ENCODE measurements at regions of chr3 and their contacts with region 1.

Region 1: GRCh38 chr3:41198950-41199865 is at the start of gene CTNNB1:
- DNase-seq: peak; percentile 85 to 95 (median 92)
- ATAC-seq: peak; percentile 80 to 83
- H3K4me3 Mint-ChIP-seq: peak within 1 kb of the TSS; percentile 89 to 99 (median 96)
- H3K27ac Mint-ChIP-seq: peak within 1 kb of the TSS; percentile 94 to 99 (median 96)
- H3K4me1 Mint-ChIP-seq: peaks cover 20 to 48% (median 37%) of the 10 kb centered on the region in 4 donors
- H3K27me3 Mint-ChIP-seq: no peaks in the 10 kb centered on the region
- polyA plus RNA-seq, gene CTNNB1: 30.6 to 59.2 (median 33.4) TPM

Region 2: GRCh38 chr3:41117398-41117870 is 81.8 kb before region 1 on chr3:
- POLR2A ChIA-PET with region 1: interaction called, 52 read pairs
- DNase-seq: peak; percentile 60 to 96 (median 86)
- ATAC-seq: peak; percentile 87 to 95
- H3K4me3 Mint-ChIP-seq: peak overlapping the region; percentile 50 to 88 (median 74)
- H3K27ac Mint-ChIP-seq: peak overlapping the region; percentile 85 to 98 (median 94)
- H3K4me1 Mint-ChIP-seq: peaks cover 27 to 38% (median 36%) of the 10 kb centered on the region in 4 donors
- H3K27me3 Mint-ChIP-seq: no peaks in the 10 kb centered on the region

Region 3: GRCh38 chr3:41188268-41188667 is 10.9 kb before region 1 on chr3:
- POLR2A ChIA-PET with region 1: interaction called, 10 read pairs
- DNase-seq: no peak
- ATAC-seq: no peak
- H3K4me3 Mint-ChIP-seq: no peak overlapping the region
- H3K27ac Mint-ChIP-seq: no peak overlapping the region
- H3K4me1 Mint-ChIP-seq: peaks cover 3 to 9% (median 6%) of the 10 kb centered on the region in 4 donors
- H3K27me3 Mint-ChIP-seq: peaks cover 0 to 13% (median 3%) of the 10 kb centered on the region in 5 donors

Region 4: DNA sequence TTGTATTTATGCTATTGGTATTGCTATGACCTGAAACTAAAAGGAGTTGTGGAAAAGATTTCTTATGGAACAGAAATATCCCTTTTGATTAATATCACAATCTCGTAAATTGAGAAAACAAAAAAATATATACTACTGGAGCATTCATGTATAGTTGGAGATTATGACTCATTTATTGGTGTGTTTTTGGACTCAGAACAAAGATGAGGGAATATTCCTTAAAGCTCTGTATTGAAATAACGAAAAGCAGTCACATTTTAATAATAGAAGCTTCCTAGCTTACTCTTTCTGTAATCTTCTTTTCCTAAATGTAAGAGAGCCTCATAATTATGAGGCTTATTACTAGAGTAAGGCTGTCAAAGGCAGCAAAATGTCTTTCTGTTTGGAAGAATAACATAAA is 14.4 kb after region 1 on chr3:
- POLR2A ChIA-PET with region 1: interaction called, 19 read pairs
- DNase-seq: no peak
- ATAC-seq: no peak
- H3K4me3 Mint-ChIP-seq: peak overlapping the region in 7 of 10 donors; percentile 31 to 70 (median 45)
- H3K27ac Mint-ChIP-seq: peak overlapping the region in 4 of 10 donors; percentile 1 to 83 (median 21)
- H3K4me1 Mint-ChIP-seq: peaks cover 48 to 87% (median 79%) of the 10 kb centered on the region in 4 donors
- H3K27me3 Mint-ChIP-seq: no peaks in the 10 kb centered on the region

Region 5: GRCh38 chr3:41477399-41478014 is 278.3 kb after region 1 on chr3:
- POLR2A ChIA-PET with region 1: no interaction called
- DNase-seq: no peak
- ATAC-seq: no peak
- H3K4me3 Mint-ChIP-seq: no peak overlapping the region
- H3K27ac Mint-ChIP-seq: no peak overlapping the region
- H3K4me1 Mint-ChIP-seq: peaks cover 0 to 6% (median 0%) of the 10 kb centered on the region in 4 donors
- H3K27me3 Mint-ChIP-seq: no peaks in the 10 kb centered on the region

Region 6: DNA sequence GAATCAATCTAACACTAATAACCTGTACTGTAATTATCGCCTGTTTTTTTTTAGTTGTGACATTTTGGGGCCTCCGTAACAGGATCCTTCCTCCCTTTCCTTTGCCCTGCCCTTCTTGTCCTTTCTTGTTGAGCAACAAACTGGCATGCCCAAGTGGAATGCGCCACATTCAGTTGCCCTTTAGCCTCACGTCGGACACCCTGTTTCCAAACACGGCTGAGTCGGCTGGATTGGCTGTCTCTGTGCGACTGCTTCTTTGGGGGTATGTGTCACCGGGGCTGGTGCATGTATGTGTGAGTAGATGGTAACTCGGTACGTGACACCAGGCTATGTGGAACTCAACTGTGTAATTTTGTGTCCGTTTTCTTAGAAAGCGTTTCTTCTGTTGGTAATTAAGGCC is 916.0 kb after region 1 on chr3:
- POLR2A ChIA-PET with region 1: no interaction called
- DNase-seq: no peak
- ATAC-seq: no peak
- H3K4me3 Mint-ChIP-seq: no peak overlapping the region
- H3K27ac Mint-ChIP-seq: peak overlapping the region in 2 of 10 donors; percentile 20 to 50
- H3K4me1 Mint-ChIP-seq: peaks cover 7 to 51% (median 11%) of the 10 kb centered on the region in 4 donors
- H3K27me3 Mint-ChIP-seq: no peaks in the 10 kb centered on the region

Measured in naive thymus-derived CD8-positive, alpha-beta T cell (primary cell).